ENCODE measurements at regions of chr1 and their contacts with region 1.

Region 1: DNA sequence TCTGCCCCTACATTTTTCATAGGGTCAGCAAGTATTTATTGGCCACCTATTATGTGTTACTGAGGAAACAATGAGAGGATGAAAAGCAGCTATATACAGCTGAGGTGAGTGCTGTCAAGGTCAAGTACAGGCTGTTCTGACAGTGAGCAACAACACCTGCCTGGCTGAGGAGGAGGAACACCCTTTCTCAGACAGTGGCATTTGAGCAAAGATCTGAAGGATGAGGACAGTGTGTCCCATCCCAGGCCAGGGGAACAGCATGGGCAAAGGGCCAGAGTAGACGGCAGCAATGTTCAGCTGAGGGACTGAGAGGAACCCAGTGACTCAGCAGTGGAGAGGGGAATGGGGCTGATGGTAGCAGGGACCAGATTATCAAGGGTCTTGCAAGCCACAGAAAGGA is 101.0 kb downstream of the ELAVL4 start:
- DNase-seq: no peak
- ATAC-seq: no peak
- H3K4me3 Mint-ChIP-seq: no peak overlapping the region
- H3K27ac Mint-ChIP-seq: no peak overlapping the region
- H3K4me1 Mint-ChIP-seq: no peaks in the 10 kb centered on the region
- H3K27me3 Mint-ChIP-seq: peaks cover 6% of the 10 kb centered on the region

Region 2: DNA sequence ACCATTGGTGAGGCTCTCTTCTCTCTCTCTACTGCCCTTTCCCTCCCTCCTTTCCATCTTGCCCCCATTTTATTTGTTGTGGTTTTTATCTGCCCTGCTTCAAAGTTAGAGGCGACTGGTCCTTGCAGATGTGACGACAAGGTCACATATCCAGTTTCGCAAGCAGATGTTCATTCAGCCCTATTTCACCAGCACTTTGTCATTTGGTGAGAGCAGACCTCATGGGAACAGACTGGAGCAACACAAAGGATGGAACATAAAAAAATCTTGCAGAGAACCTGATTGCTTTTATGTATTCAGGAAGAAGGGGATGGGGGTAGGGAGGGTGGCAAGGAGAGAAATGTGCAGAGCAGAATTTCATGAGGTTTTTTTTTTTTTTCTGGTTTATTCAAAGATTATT is 16.7 kb before region 1 on chr1:
- CTCF ChIA-PET with region 1: no interaction called
- POLR2A ChIA-PET with region 1: no interaction called
- intact Hi-C with region 1: loop called in 1 of 2 experiments (anchors 2 kb)
- DNase-seq: no peak
- ATAC-seq: no peak
- H3K4me3 Mint-ChIP-seq: no peak overlapping the region
- H3K27ac Mint-ChIP-seq: no peak overlapping the region
- H3K4me1 Mint-ChIP-seq: no peaks in the 10 kb centered on the region
- H3K27me3 Mint-ChIP-seq: peaks cover 10% of the 10 kb centered on the region

Measured in activated CD4-positive, alpha-beta T cell treated with anti-CD3 and anti-CD28 coated beads for 36 hours (primary cell).